B cell (primary cell): ENCODE measurements at regions of chr12 and their contacts with region 1.

Region 1: DNA sequence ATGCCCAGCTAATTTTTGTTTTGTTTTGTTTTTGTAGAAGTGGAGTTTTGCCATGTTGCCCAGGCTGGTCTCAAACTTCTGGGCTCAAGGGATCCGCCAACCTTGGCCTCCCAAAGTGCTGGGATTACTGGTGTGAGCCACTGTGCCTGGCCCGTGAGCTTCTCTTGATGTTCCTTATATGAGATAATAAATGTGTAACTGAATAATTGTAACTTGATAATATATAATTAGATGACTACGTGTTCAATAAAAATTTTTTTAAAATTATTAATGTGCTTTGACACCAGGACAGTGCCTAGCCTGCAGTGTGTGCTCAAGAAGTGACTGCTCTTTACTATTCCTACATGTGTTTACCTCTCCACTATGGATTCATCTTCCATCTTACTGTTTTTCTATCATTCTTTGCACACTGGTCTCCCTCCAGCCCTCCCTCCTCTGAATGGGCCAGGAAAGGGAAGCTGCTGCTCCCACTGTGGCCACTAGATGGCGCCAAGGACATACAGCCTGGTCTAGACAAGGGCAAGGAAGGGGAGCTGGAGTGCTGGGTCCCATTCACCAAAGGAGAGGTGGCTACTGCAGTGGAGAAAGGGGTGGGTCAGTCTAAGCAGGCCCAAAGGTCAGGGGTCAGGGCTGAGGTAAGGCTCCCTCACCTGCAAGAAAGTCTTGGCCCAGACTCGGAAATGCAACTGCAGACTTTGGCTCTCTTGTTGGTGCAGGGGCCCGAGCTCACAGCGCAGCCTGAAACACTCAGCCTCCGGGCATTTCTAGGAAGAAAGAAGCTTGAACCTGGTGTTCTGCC is 14.7 kb upstream of the ZNF385A start:
- DNase-seq: peak; percentile 88
- ATAC-seq: peak; percentile 99
- H3K4me3 ChIP-seq: no peak overlapping the region
- H3K4me3 Mint-ChIP-seq: no peak overlapping the region
- H3K27ac ChIP-seq: no peak overlapping the region
- H3K27ac Mint-ChIP-seq: no peak overlapping the region
- H3K4me1 ChIP-seq: peaks cover 0 to 1% of the 10 kb centered on the region in 2 donors
- H3K4me1 Mint-ChIP-seq: peaks cover 6% of the 10 kb centered on the region
- H3K27me3 ChIP-seq: no peaks in the 10 kb centered on the region
- H3K27me3 Mint-ChIP-seq: no peaks in the 10 kb centered on the region
- CTCF ChIP-seq: peak; percentile 98

Region 2: GRCh38 chr12:54352022-54352531 is 47.1 kb before region 1 on chr12:
- CTCF ChIA-PET with region 1: no interaction called
- POLR2A ChIA-PET with region 1: no interaction called
- intact Hi-C with region 1: no loop called
- DNase-seq: no peak
- ATAC-seq: no peak
- H3K4me3 ChIP-seq: no peak overlapping the region
- H3K4me3 Mint-ChIP-seq: no peak overlapping the region
- H3K27ac ChIP-seq: no peak overlapping the region
- H3K27ac Mint-ChIP-seq: no peak overlapping the region
- H3K4me1 ChIP-seq: peaks cover 4% of the 10 kb centered on the region in 2 donors
- H3K4me1 Mint-ChIP-seq: peaks cover 8% of the 10 kb centered on the region
- H3K27me3 ChIP-seq: no peaks in the 10 kb centered on the region
- H3K27me3 Mint-ChIP-seq: no peaks in the 10 kb centered on the region
- CTCF ChIP-seq: no peak

Region 3: GRCh38 chr12:54379401-54380201 is 19.6 kb before region 1 on chr12:
- CTCF ChIA-PET with region 1: interaction called, 41 read pairs
- POLR2A ChIA-PET with region 1: no interaction called
- intact Hi-C with region 1: no loop called
- DNase-seq: peak; percentile 88
- ATAC-seq: peak; percentile 90
- H3K4me3 ChIP-seq: peak overlapping the region in 3 of 5 experiments; percentile 11 to 43 (median 40)
- H3K4me3 Mint-ChIP-seq: peak overlapping the region; percentile 77
- H3K27ac ChIP-seq: no peak overlapping the region
- H3K27ac Mint-ChIP-seq: peak overlapping the region; percentile 62
- H3K4me1 ChIP-seq: peaks cover 26 to 45% of the 10 kb centered on the region in 2 donors
- H3K4me1 Mint-ChIP-seq: peaks cover 35% of the 10 kb centered on the region
- H3K27me3 ChIP-seq: no peaks in the 10 kb centered on the region
- H3K27me3 Mint-ChIP-seq: no peaks in the 10 kb centered on the region
- CTCF ChIP-seq: peak; percentile 100

Region 4: GRCh38 chr12:54419088-54419892 is 20.1 kb after region 1 on chr12 and contains the start of gene ITGA5:
- CTCF ChIA-PET with region 1: interaction called, 1,030 read pairs
- POLR2A ChIA-PET with region 1: no interaction called
- intact Hi-C with region 1: loop called (anchors 2 kb)
- DNase-seq: peak; percentile 48
- ATAC-seq: peak; percentile 43
- H3K4me3 ChIP-seq: peak within 1 kb of the TSS; percentile 48 to 62 (median 57)
- H3K4me3 Mint-ChIP-seq: peak within 1 kb of the TSS; percentile 84
- H3K27ac ChIP-seq: peak within 1 kb of the TSS in 1 of 2 donors; percentile 62
- H3K27ac Mint-ChIP-seq: peak within 1 kb of the TSS; percentile 77
- H3K4me1 ChIP-seq: peaks cover 51 to 58% of the 10 kb centered on the region in 2 donors
- H3K4me1 Mint-ChIP-seq: peaks cover 49% of the 10 kb centered on the region
- H3K27me3 ChIP-seq: peaks cover 0 to 19% (median 8%) of the 10 kb centered on the region in 4 experiments
- H3K27me3 Mint-ChIP-seq: peaks cover 21% of the 10 kb centered on the region
- CTCF ChIP-seq: no peak
- total RNA-seq, gene ITGA5: 6.1 and 6.7 TPM in 2 replicates

Region 5: GRCh38 chr12:54463034-54463433 is 63.8 kb after region 1 on chr12:
- CTCF ChIA-PET with region 1: interaction called, 14 read pairs
- POLR2A ChIA-PET with region 1: no interaction called
- intact Hi-C with region 1: no loop called
- DNase-seq: no peak
- ATAC-seq: no peak
- H3K4me3 ChIP-seq: no peak overlapping the region
- H3K4me3 Mint-ChIP-seq: no peak overlapping the region
- H3K27ac ChIP-seq: no peak overlapping the region
- H3K27ac Mint-ChIP-seq: no peak overlapping the region
- H3K4me1 ChIP-seq: no peaks in the 10 kb centered on the region
- H3K4me1 Mint-ChIP-seq: no peaks in the 10 kb centered on the region
- H3K27me3 ChIP-seq: no peaks in the 10 kb centered on the region
- H3K27me3 Mint-ChIP-seq: peaks cover 28% of the 10 kb centered on the region
- CTCF ChIP-seq: no peak